Activated CD4-positive, alpha-beta memory T cell treated with anti-CD3 and anti-CD28 coated beads for 36 hours (primary cell): ENCODE measurements at regions of chr6 and their contacts with region 1.

Region 1: DNA sequence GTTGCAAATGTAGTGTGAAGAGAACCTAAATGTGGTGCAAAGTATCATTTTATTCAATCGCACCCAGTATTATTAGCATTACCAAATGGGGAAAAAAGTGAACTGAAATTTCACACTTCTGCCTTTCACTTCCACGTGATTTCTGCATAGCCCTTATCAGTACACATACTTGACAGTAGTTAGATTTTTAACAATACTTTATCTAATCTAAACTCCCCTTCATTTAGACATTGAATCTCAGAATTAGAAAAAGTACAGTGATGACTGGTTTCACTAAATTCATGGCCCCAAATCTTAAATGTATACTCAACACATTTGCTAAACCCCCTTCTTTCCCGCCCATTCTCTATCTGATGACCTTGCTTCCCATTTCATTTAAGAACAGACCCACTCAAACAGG is 14.3 kb downstream of the STX7 start:
- DNase-seq: no peak
- H3K4me3 Mint-ChIP-seq: no peak overlapping the region
- H3K27ac Mint-ChIP-seq: no peak overlapping the region
- H3K4me1 Mint-ChIP-seq: peaks cover 45% of the 10 kb centered on the region
- H3K27me3 Mint-ChIP-seq: no peaks in the 10 kb centered on the region

Region 2: DNA sequence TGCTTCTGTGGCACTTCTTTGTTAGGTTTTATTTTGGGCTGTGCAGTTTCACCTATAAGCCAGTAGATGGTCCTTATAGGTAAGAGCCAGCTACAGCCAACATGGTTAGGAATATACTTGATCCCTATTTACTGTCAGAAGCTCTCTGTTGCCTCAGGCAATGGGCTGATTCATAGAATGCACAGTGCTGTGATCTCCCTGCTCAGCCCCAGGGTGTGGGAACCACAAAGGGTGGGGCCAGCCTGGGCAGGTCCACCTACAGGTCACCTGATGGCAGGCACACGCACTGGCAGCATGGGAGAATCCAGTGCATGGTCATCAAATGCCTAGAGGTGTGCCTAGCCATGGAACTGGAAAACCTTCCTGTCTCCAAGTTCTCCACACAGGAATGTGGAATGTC is 289.3 kb before region 1 on chr6:
- CTCF ChIA-PET with region 1: no interaction called
- POLR2A ChIA-PET with region 1: no interaction called
- intact Hi-C with region 1: no loop called
- DNase-seq: no peak
- H3K4me3 Mint-ChIP-seq: no peak overlapping the region
- H3K27ac Mint-ChIP-seq: no peak overlapping the region
- H3K4me1 Mint-ChIP-seq: no peaks in the 10 kb centered on the region
- H3K27me3 Mint-ChIP-seq: peaks cover 15% of the 10 kb centered on the region

Region 3: DNA sequence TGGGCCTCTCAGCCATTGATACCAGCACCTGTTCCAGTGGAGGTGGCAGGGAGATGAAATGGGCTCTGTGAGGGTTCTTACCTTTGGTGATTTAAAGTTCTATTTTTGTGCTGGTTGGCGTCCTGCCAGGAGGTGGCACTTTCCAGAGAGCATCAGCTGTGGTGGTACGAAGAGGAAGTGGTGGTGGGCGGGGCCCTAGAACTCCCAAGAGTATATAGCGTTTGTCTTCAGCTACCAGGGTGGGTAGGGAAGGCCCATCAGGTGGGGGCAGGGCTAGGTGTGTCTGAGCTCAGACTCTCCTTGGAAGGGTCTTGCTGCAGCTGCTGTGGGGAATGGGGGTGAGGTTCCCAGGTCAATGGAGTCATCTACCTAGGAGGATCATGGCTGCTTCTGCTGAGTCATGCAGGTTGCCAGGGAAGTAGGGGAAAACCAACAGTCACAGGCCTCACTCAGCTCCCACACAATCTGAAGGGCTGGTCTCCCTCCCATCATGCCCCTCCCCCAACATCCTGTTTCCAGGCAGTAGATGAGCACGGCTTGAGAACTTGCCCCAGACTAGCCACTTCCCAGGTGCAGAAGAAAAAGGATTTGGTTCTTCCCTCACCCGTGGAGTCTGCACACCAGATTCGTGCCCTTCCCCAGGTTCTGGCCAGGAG is 144.0 kb before region 1 on chr6:
- CTCF ChIA-PET with region 1: no interaction called
- POLR2A ChIA-PET with region 1: no interaction called
- intact Hi-C with region 1: no loop called
- DNase-seq: peak; percentile 43
- H3K4me3 Mint-ChIP-seq: no peak overlapping the region
- H3K27ac Mint-ChIP-seq: no peak overlapping the region
- H3K4me1 Mint-ChIP-seq: peaks cover 16% of the 10 kb centered on the region
- H3K27me3 Mint-ChIP-seq: no peaks in the 10 kb centered on the region

Region 4: DNA sequence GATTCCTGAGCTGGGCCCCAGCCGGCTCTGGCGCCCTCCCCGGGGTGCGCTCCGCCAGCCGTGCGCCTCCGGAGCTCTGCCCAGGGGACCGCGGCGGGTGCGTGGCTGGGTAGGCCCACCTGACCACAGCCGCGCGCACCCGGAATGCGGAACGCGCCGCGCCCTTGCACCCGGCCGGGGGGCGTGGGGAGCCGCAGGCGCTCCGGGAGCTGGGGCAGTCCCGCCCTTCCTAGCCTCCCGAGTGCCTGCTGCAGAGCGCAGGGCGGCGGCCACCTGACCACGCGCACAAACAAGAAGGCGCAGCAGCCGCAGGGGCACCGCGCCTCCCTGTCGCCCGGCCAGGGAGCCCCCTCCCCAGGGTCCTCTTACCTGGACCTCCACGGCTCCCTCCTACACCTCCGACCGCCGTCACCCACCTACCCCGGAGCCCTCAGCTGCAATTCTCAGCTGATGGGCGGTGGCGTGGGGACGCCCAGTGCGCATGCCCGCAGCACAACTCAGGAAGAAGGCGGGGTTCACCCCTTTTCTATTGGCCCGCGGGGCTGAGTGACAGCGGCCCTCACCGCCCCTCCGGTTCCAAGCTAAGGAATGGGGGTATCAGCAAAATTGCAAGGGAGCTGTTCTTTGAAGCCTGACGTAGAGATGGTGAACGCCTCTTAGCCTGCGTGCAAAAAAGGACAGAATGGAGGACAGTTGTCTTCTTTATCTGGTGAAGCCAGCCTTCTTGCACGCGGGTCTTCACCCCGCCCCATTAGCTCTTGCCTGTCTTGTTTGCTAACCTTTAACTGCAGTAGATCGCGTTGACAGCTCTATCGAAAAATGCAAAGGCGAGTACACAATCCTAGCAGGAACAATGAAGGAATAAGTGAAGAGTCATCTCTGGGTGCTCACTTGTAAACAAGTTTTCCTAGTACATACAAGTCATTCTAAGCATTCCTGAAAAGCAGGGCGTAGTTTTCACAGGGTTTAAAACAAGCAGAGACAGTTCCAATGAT is 14.3 kb after region 1 on chr6 and contains the start of gene STX7:
- CTCF ChIA-PET with region 1: interaction called, 6 read pairs
- POLR2A ChIA-PET with region 1: interaction called, 6 read pairs
- intact Hi-C with region 1: loop called (anchors 1 kb)
- DNase-seq: peak; percentile 90
- H3K4me3 Mint-ChIP-seq: peak within 1 kb of the TSS; percentile 95
- H3K27ac Mint-ChIP-seq: peak within 1 kb of the TSS; percentile 69
- H3K4me1 Mint-ChIP-seq: peaks cover 36% of the 10 kb centered on the region
- H3K27me3 Mint-ChIP-seq: no peaks in the 10 kb centered on the region
- total RNA-seq, gene STX7: 16.2 to 19.0 TPM